ENCODE measurements at regions of chr20 and their contacts with region 1.

Region 1: DNA sequence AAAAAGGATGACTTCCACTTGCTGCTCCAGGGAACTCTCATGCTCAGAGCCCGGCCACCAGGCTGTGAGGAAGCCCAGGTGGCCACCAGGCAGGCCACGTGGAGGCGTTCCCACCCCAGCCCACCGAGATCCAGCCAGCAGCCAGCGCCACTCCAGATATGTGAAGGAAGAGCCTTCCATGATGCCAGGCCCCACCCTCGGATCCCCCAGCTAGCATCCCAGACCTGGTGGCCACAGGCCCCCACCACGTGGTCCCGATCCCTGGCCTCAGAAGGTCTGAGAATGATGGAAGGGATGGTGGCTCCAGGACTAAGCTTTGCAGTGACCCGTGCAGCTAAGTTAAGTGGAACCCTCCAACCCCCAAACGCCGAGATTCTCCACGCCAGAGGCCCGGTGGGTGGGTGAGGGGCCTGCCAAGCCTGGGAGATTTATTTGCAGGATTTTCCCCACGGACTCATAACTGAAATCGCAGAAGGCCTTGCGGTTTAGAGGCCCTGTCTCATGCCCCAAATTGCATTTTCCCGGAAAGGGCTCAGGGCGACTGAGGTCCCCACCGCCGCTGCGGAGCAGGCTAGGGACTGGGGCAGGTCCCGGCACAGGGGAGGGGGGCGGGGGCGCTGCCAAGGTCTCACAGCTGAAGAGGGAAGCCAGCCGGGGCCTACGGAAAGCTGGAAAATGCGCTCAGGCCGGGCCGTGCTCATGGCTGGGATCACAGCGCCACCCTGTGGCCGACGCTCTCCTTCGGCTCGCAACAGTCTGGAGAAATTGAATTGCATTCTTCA is 31.1 kb upstream of the CST7 start:
- DNase-seq: peak; percentile 67 to 88
- H3K4me3 ChIP-seq: no peak overlapping the region
- H3K27ac ChIP-seq: no peak overlapping the region
- H3K4me1 ChIP-seq: no peaks in the 10 kb centered on the region
- H3K27me3 ChIP-seq: no peaks in the 10 kb centered on the region; a peak in 1 of 7 replicates
- CTCF ChIP-seq: peak; percentile 84 to 91 (median 89)
- EP300 ChIP-seq: no peak
- POLR2A ChIP-seq: no peak
- RAD21 ChIP-seq: peak; percentile 96 to 97

Region 2: GRCh38 chr20:24790746-24791283 is 127.2 kb before region 1 on chr20:
- CTCF ChIA-PET with region 1: interaction called, 13 read pairs
- POLR2A ChIA-PET with region 1: no interaction called
- DNase-seq: no peak
- H3K4me3 ChIP-seq: no peak overlapping the region
- H3K27ac ChIP-seq: no peak overlapping the region
- H3K4me1 ChIP-seq: peaks cover 0 to 9% (median 5%) of the 10 kb centered on the region in 4 experiments; a peak in 3 of 7 replicates
- H3K27me3 ChIP-seq: no peaks in the 10 kb centered on the region
- CTCF ChIP-seq: peak in 2 of 3 experiments; percentile 18 to 35; a peak in 2 of 4 replicates
- EP300 ChIP-seq: no peak
- POLR2A ChIP-seq: no peak
- RAD21 ChIP-seq: peak; percentile 21 to 49; a peak in 3 of 4 replicates

Region 3: DNA sequence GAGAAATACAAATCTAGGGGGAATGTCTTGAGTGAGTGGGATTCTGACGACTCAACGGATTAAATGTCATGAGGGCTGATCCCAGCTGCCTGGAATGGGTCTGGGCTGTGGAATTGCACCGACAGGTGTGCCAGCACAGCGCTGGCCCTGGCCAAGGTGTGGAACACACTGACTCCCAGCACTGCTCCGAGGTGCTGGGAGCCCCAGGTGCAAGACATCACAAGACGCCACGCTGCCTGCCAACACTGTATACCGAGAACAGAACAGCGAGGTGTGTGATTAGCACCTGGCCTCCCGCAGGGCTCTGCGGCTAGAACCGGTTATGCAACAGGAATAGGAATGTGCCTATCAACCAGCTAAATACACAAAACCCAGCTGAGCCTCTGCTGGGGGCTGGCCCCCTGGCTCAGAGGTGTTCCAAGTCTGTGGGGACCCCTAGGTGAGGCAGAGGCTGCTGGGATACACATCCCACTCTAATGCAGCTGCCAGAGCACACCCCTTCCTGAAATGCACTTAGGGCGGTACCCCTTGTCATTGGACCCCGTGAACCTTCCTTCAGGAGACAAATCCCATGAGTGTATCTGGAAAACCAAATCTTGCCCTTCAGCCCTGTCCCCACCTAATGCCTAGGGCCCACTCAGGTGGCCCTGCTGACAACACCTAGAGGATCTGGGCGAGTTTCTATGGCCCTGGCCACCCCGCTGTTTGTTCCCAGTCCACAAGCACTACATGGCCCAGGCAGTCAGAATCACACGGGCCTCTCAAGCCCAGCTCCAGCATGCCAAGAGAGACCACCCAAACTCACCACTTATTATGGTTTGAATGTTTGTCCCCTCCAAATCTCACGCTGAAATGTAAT is 99.5 kb after region 1 on chr20:
- CTCF ChIA-PET with region 1: no interaction called
- POLR2A ChIA-PET with region 1: no interaction called
- DNase-seq: peak in 1 of 2 experiments; percentile 59
- H3K4me3 ChIP-seq: no peak overlapping the region
- H3K27ac ChIP-seq: no peak overlapping the region
- H3K4me1 ChIP-seq: peaks cover 0 to 7% (median 6%) of the 10 kb centered on the region in 4 experiments; a peak in 4 of 7 replicates
- H3K27me3 ChIP-seq: no peaks in the 10 kb centered on the region
- CTCF ChIP-seq: no peak
- EP300 ChIP-seq: no peak
- POLR2A ChIP-seq: no peak
- RAD21 ChIP-seq: no peak

Measured in H1 (cell line).